ENCODE measurements at regions of chr10 and their contacts with region 1.

Region 1: GRCh38 chr10:87925570-87925969 is 62.1 kb downstream of the PTEN start:
- DNase-seq: no peak
- ATAC-seq: no peak
- H3K4me3 ChIP-seq: no peak overlapping the region
- H3K27ac ChIP-seq: no peak overlapping the region
- H3K4me1 ChIP-seq: peaks cover 26% of the 10 kb centered on the region
- H3K27me3 ChIP-seq: no peaks in the 10 kb centered on the region
- CTCF ChIP-seq: no peak
- EP300 ChIP-seq: no peak
- POLR2A ChIP-seq: no peak
- RAD21 ChIP-seq: no peak

Region 2: DNA sequence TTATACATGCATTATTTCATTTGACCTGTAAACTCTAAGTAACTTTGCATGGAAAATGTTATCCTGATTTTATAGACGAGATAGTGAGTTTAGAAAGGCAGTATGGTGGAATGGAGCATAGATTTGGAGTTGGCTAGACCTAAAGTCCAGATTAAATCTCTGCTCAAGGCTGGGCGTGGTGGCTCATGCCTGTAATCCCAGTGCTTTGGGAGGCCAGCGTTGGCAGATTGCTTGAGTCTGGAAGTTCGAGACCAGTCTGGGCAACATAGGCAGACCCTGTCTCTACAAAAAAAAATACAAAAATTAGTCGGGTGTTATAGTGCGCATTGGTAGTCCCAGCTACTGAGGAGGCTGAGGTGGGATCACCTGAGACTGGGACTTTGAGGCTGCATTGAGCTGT is 52.7 kb before region 1 on chr10:
- CTCF ChIA-PET with region 1: interaction called, 3 read pairs
- POLR2A ChIA-PET with region 1: no interaction called
- RAD21 ChIA-PET with region 1: interaction called, 5 read pairs
- SMC1A ChIA-PET with region 1: interaction called, 11 read pairs
- in situ Hi-C with region 1: no loop called
- intact Hi-C with region 1: no loop called
- DNase-seq: no peak
- ATAC-seq: peak; percentile 8
- H3K4me3 ChIP-seq: peak overlapping the region; percentile 61
- H3K27ac ChIP-seq: no peak overlapping the region
- H3K4me1 ChIP-seq: no peaks in the 10 kb centered on the region
- H3K27me3 ChIP-seq: no peaks in the 10 kb centered on the region
- CTCF ChIP-seq: no peak
- EP300 ChIP-seq: no peak
- POLR2A ChIP-seq: no peak
- RAD21 ChIP-seq: no peak